Transverse colon (tissue), 4 donors: ENCODE measurements at regions of chr18 and their contacts with region 1.

Region 1: DNA sequence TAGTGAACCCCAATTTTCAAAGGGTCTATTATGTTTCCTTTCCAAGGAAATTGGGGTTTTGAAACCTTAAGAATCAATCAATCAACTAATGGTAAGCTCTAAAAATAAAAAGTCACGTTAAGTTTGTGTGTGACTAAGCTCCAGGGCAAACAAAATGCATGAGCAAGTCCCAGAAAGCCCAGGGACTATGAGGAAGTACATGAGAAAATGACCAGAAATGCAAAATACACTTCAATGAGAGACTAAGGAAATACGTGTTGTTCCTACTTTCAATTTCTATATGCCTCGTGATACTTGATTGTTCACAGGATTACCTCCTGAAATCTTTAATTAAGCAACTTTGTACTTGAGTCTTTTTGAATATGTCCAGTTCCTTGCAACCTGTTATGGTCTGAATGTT is 684.4 kb upstream of the SYT4 start:
- DNase-seq: no peak
- H3K4me3 ChIP-seq: no peak overlapping the region
- H3K27ac ChIP-seq: no peak overlapping the region
- H3K4me1 ChIP-seq: no peaks in the 10 kb centered on the region
- H3K27me3 ChIP-seq: no peaks in the 10 kb centered on the region
- CTCF ChIP-seq: no peak
- EP300 ChIP-seq: no peak
- POLR2A ChIP-seq: no peak

Region 2: GRCh38 chr18:43534511-43534910 is 427.2 kb before region 1 on chr18:
- in situ Hi-C with region 1: no loop called
- intact Hi-C with region 1: no loop called
- DNase-seq: no peak
- H3K4me3 ChIP-seq: no peak overlapping the region
- H3K27ac ChIP-seq: no peak overlapping the region
- H3K4me1 ChIP-seq: no peaks in the 10 kb centered on the region
- H3K27me3 ChIP-seq: no peaks in the 10 kb centered on the region
- CTCF ChIP-seq: no peak
- EP300 ChIP-seq: no peak
- POLR2A ChIP-seq: no peak

Region 3: GRCh38 chr18:43978174-43978573 is 16.5 kb after region 1 on chr18:
- in situ Hi-C with region 1: no loop called
- intact Hi-C with region 1: loop called (anchors 1 kb)
- DNase-seq: no peak
- H3K4me3 ChIP-seq: no peak overlapping the region
- H3K27ac ChIP-seq: no peak overlapping the region
- H3K4me1 ChIP-seq: no peaks in the 10 kb centered on the region
- H3K27me3 ChIP-seq: no peaks in the 10 kb centered on the region
- CTCF ChIP-seq: no peak
- EP300 ChIP-seq: no peak
- POLR2A ChIP-seq: no peak

Region 4: DNA sequence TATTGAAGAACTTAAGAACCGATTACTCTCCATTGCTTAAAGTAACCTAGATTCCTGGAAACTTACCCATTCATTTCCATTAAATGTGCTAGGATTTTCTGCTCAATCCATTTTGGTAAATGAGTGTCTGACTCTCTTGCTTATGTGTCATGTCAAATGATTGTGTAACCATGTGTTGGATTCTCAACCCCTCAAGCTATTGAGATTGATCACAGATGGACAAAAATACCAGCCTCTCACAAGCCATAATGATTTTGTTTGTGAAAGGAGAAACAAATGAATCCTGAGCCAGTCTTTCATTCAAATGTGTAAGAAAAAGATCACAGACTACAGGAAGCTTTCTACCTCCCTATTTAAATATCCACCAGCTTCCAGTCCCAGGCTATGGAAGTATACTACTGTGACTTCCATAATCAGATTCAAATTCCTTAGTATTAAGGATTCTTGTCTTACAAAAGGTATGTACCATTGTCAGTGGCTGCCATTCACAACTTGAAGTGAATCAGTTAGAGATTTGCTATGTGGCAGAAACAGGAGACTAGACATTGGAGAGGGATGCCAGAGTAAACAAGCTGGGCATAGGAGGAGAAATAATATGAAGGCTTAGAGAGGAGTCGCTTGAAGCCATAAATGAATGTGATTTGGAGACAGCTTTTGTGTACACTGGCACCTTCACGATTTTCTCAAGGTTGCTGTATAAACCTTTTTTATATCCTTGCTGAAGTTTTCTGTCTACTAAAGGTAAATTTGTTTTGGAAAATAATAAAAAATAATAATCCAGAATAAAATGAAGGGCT is 220.4 kb after region 1 on chr18:
- in situ Hi-C with region 1: no loop called
- intact Hi-C with region 1: no loop called
- DNase-seq: no peak
- H3K4me3 ChIP-seq: no peak overlapping the region
- H3K27ac ChIP-seq: no peak overlapping the region
- H3K4me1 ChIP-seq: no peaks in the 10 kb centered on the region
- H3K27me3 ChIP-seq: no peaks in the 10 kb centered on the region
- CTCF ChIP-seq: no peak
- EP300 ChIP-seq: no peak
- POLR2A ChIP-seq: no peak